GM10248 (cell line): ENCODE measurements at regions of chr5 and their contacts with region 1.

Region 1: GRCh38 chr5:72465601-72466563 is 41.3 kb downstream of the ZNF366 start:
- DNase-seq: peak; percentile 57
- CTCF ChIP-seq: no peak

Region 2: GRCh38 chr5:72166070-72166979 is 299.6 kb before region 1 on chr5:
- CTCF ChIA-PET with region 1: no interaction called
- POLR2A ChIA-PET with region 1: no interaction called
- DNase-seq: no peak
- CTCF ChIP-seq: no peak

Region 3: GRCh38 chr5:72451741-72452505 is 14.0 kb before region 1 on chr5:
- CTCF ChIA-PET with region 1: interaction called, 12 read pairs
- POLR2A ChIA-PET with region 1: interaction called, 3 read pairs
- DNase-seq: peak; percentile 70
- CTCF ChIP-seq: no peak